Cardiac septum (tissue), 1 donor: ENCODE measurements at regions of chr5 and their contacts with region 1.

Region 1: GRCh38 chr5:140157032-140157803 is 17.8 kb upstream of the CYSTM1 start:
- DNase-seq: peak; percentile 96

Region 2: DNA sequence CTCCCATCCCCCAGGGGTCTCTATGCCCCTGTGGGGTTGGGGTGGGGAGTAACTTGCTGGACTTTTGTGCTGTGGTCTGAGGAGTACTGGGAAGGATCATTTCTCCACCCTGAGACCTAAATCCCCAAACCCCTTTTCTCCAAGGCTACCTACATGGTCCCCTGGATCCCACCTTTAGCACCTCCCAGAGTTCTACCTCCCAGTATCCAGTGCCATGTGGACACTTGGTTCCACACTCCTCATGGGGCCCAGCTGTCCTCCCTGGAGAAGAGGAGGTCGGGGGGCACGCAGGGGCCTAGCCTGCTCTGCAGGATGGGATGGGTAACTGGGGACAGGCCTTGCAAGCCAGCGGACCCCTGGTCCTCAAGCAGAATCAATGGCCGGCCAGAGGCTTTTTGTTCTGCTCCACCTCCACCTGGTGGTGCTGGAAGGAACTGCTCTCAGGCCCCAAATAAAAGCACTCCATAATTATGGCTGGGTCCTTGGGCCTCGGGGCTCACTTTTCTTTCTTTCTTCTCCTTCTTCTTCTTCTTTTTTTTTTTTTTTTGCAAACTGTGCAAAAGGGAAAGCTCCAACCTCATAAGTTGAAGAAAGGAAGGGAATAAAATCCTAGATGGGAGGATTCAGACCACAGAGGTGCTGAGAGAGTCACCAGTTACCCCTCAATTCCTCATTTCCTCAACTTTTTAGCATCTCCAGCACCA is 293.2 kb before region 1 on chr5:
- intact Hi-C with region 1: loop called (anchors 5 kb)
- DNase-seq: no peak